AG04449 (cell line): ENCODE measurements at regions of chr12 and their contacts with region 1.

Region 1: DNA sequence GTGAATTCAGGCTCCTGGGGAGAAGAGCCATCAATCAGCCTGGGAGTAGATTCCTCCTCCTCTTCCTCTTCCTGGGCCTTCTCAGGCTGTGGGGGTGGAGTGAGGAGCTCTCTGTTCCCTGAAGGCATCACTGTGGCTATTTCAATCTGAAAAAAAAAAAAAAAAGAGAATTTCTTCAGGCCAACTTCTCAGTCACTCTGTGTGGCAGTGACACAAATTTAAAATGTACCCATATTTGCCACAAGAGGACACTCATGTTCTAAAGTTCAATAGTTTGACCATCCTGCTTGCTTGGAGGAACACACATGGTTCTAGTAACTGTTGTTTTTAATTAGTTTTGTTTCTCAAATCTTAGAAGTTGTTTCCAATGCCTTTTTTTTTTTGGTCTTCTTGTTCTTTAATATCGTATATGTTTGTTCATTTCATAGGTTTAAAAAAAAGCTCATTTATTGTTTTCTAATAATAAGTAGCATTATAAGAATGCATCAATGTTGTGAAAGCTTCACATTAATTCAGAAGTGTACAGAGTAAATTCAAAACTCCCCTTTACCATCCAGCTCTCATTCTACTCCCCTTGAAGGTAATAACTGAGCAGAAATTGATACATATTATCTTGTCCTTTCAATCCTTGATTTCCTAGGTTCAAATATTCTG is 23.3 kb upstream of the CCER1 start:
- DNase-seq: no peak
- H3K4me3 ChIP-seq: no peak overlapping the region
- CTCF ChIP-seq: peak; percentile 51

Region 2: GRCh38 chr12:91109148-91109564 is 130.9 kb after region 1 on chr12:
- CTCF ChIA-PET with region 1: interaction called, 67 read pairs
- POLR2A ChIA-PET with region 1: interaction called, 3 read pairs
- DNase-seq: no peak
- H3K4me3 ChIP-seq: peak overlapping the region; percentile 58
- CTCF ChIP-seq: peak; percentile 47

Region 3: GRCh38 chr12:91178139-91178561 is 199.9 kb after region 1 on chr12:
- CTCF ChIA-PET with region 1: interaction called, 39 read pairs
- POLR2A ChIA-PET with region 1: no interaction called
- DNase-seq: no peak
- H3K4me3 ChIP-seq: peak overlapping the region; percentile 40
- CTCF ChIP-seq: peak; percentile 41

Region 4: GRCh38 chr12:91326058-91327027 is 348.1 kb after region 1 on chr12:
- CTCF ChIA-PET with region 1: interaction called, 84 read pairs
- POLR2A ChIA-PET with region 1: no interaction called
- DNase-seq: no peak
- H3K4me3 ChIP-seq: no peak overlapping the region
- CTCF ChIP-seq: peak; percentile 59

Region 5: GRCh38 chr12:91349476-91349875 is 371.2 kb after region 1 on chr12:
- CTCF ChIA-PET with region 1: interaction called, 115 read pairs
- POLR2A ChIA-PET with region 1: no interaction called
- DNase-seq: no peak
- H3K4me3 ChIP-seq: no peak overlapping the region
- CTCF ChIP-seq: no peak